H1 (cell line): ENCODE measurements at regions of chr6 and their contacts with region 1.

Region 1: DNA sequence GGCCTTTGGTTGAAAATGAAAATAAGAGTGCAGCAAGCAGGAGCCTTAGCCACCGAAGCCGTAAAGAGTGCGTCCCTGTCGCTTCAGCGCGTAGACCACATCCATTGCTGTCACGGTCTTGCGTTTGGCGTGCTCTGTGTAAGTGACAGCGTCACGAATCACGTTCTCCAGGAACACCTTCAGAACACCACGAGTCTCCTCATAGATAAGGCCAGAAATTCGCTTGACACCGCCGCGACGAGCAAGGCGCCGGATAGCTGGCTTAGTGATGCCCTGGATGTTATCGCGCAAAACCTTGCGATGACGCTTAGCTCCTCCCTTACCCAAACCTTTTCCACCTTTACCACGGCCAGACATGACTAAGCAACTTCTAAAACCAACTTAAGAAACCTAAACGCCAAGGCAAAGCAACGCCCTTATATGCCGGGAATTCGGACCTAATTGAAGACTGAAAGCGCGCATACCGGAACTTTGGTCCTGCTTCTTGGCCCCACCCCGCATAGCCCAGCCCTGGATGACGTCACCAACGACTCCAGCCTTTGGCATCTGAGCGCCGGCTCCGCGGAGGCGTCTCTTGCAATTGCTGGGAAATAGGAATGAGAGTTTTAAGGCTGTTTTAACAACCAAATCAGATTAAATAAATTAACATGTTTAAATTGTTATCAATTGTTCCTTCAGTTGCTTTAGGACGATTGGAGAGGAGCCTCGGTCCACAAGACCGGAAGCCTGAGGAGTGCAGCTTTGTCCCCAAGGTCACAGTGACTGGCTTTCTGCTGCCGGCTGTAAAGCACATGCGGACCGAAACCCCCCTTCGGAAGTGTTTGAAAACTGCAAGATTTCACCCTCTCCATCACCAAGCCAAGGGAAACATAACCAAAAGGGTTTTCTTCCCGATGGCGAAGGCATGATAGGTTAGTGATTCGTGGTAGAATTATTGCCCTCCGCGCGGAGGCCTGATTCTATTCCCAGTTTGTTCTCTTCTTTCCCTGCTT is 79.6 kb upstream of the BTN3A2 start:
- DNase-seq: peak; percentile 94 to 100
- H3K4me3 ChIP-seq: peak overlapping the region; percentile 74 to 95 (median 80)
- H3K27ac ChIP-seq: peak overlapping the region; percentile 96
- H3K4me1 ChIP-seq: peaks cover 0 to 7% (median 2%) of the 10 kb centered on the region in 4 experiments; a peak in 1 of 7 replicates
- H3K27me3 ChIP-seq: no peaks in the 10 kb centered on the region
- CTCF ChIP-seq: no peak
- EP300 ChIP-seq: peak in 1 of 2 experiments; percentile 97; a peak in 2 of 3 replicates
- POLR2A ChIP-seq: peak; percentile 100
- RAD21 ChIP-seq: no peak

Region 2: DNA sequence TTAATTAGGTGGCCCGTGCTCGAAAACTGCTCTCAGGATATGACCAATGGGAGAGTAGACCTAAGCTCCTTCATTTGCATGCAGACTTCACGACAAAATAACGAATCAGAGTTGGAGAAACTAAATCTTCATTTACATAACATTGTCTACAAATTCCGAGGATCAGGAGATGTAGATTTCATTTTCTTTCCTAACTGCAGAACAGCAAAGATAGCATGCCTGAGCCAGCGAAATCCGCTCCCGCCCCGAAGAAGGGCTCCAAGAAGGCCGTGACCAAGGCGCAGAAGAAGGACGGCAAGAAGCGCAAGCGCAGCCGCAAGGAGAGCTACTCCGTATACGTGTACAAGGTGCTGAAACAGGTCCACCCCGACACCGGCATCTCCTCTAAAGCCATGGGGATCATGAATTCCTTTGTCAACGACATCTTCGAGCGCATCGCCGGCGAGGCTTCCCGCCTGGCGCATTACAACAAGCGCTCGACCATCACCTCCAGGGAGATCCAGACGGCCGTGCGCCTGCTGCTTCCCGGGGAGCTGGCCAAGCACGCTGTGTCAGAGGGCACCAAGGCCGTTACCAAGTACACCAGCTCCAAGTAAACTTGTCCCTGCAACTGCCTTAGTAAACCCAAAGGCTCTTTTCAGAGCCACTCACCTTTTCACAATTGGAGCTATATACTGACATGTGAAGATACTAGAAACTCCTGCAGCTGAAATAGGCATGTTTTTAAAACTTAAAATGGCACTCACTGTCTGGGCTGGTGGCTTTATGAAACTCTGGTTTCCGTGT is 101.7 kb before region 1 on chr6:
- CTCF ChIA-PET with region 1: no interaction called
- POLR2A ChIA-PET with region 1: interaction called, 197 read pairs
- DNase-seq: peak in 1 of 2 experiments; percentile 82
- H3K4me3 ChIP-seq: peak overlapping the region; percentile 45 to 73 (median 70)
- H3K27ac ChIP-seq: peak overlapping the region; percentile 97
- H3K4me1 ChIP-seq: peaks cover 0 to 17% (median 8%) of the 10 kb centered on the region in 4 experiments; a peak in 5 of 7 replicates
- H3K27me3 ChIP-seq: no peaks in the 10 kb centered on the region
- CTCF ChIP-seq: no peak
- EP300 ChIP-seq: no peak
- POLR2A ChIP-seq: peak; percentile 94 to 99
- RAD21 ChIP-seq: no peak

Region 3: DNA sequence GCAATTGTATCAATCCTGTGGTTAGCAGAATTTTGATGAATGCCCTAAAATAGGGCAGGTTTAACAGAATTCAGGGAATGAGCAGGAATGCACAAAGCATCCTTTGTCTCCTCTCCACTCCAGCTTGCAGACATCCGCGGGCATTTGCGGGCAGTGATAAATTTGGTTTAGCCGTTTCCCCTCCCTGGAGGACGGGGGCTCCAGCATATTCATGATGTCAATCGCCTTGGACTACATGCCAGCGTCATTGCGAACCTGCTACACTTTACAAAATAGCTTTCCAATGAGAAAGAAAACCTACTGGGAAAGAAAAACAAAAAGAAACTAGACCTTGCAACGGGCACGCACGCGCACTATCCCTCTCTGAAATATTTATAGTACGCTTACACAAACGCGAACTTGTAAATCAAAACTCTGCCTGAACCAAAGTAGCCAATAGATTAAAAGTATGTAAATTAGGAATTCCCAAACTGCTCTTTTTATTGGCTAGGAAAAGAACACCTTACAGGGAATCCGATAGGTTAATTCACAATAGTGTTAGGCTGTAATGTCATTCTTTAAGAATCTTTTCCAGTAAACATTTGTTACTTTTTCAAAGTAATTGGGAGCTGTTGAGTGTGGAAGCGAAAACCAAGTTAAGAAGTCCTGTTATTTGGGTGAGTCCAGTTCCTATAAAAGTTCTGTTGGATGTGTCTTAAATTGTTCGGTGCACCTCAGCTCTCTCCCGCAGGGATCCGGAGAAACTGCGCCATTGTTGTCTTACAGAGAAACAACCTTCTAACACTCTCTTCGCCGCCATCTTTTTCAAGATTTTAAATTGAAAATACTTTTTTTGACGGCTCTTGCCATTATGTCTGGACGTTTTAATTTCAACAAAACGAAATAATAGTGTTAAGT is 61.5 kb before region 1 on chr6:
- CTCF ChIA-PET with region 1: interaction called, 6 read pairs
- POLR2A ChIA-PET with region 1: interaction called, 110 read pairs
- DNase-seq: no peak
- H3K4me3 ChIP-seq: peak overlapping the region; percentile 61 to 94 (median 76)
- H3K27ac ChIP-seq: peak overlapping the region; percentile 91
- H3K4me1 ChIP-seq: peaks cover 0 to 7% (median 3%) of the 10 kb centered on the region in 4 experiments; a peak in 5 of 7 replicates
- H3K27me3 ChIP-seq: no peaks in the 10 kb centered on the region
- CTCF ChIP-seq: no peak
- EP300 ChIP-seq: no peak
- POLR2A ChIP-seq: peak; percentile 48 to 76; a peak in 2 of 3 replicates
- RAD21 ChIP-seq: no peak

Region 4: GRCh38 chr6:26295691-26296555 is 10.5 kb after region 1 on chr6:
- CTCF ChIA-PET with region 1: interaction called, 3 read pairs
- POLR2A ChIA-PET with region 1: interaction called, 44 read pairs
- DNase-seq: no peak
- H3K4me3 ChIP-seq: no peak overlapping the region
- H3K27ac ChIP-seq: no peak overlapping the region
- H3K4me1 ChIP-seq: peaks cover 0 to 4% (median 0%) of the 10 kb centered on the region in 4 experiments; a peak in 1 of 7 replicates
- H3K27me3 ChIP-seq: peaks cover 0 to 1% (median 0%) of the 10 kb centered on the region in 4 experiments; a peak in 1 of 7 replicates
- CTCF ChIP-seq: no peak
- EP300 ChIP-seq: no peak
- POLR2A ChIP-seq: no peak
- RAD21 ChIP-seq: no peak

Region 5: GRCh38 chr6:26329763-26330511 is 44.5 kb after region 1 on chr6:
- CTCF ChIA-PET with region 1: no interaction called
- POLR2A ChIA-PET with region 1: interaction called, 10 read pairs
- DNase-seq: peak in 1 of 2 experiments; percentile 90
- H3K4me3 ChIP-seq: peak overlapping the region; percentile 72 to 91 (median 81); a peak in 7 of 8 replicates
- H3K27ac ChIP-seq: no peak overlapping the region
- H3K4me1 ChIP-seq: peaks cover 0 to 3% (median 0%) of the 10 kb centered on the region in 4 experiments; a peak in 2 of 7 replicates
- H3K27me3 ChIP-seq: peaks cover 0 to 10% (median 8%) of the 10 kb centered on the region in 4 experiments; a peak in 5 of 7 replicates
- CTCF ChIP-seq: no peak
- EP300 ChIP-seq: no peak
- POLR2A ChIP-seq: no peak
- RAD21 ChIP-seq: no peak

Region 6: DNA sequence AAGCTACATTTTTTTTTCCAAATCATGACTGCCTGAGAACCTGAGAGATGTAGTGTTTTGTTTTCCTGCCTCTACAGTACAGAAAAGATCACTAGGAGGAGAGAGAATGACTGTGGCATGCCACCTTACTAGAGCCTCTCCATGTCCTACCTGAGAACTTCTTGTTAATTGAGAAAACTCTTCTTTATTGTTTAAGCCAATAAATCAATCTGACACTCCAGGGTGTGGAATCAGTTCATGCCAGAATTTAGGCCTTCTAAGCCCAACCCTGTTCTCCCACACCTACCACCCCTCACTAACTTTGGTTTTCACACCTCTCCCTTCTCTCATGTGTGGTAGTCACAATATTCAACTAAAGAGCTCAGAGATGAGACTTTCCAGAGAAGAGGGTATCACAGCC is 54.6 kb after region 1 on chr6:
- CTCF ChIA-PET with region 1: no interaction called
- POLR2A ChIA-PET with region 1: no interaction called
- DNase-seq: no peak
- H3K4me3 ChIP-seq: no peak overlapping the region
- H3K27ac ChIP-seq: no peak overlapping the region
- H3K4me1 ChIP-seq: peaks cover 0 to 2% (median 0%) of the 10 kb centered on the region in 4 experiments; a peak in 1 of 7 replicates
- H3K27me3 ChIP-seq: no peaks in the 10 kb centered on the region
- CTCF ChIP-seq: no peak
- EP300 ChIP-seq: no peak
- POLR2A ChIP-seq: no peak
- RAD21 ChIP-seq: no peak

Region 7: GRCh38 chr6:26351544-26351953 is 66.1 kb after region 1 on chr6:
- CTCF ChIA-PET with region 1: no interaction called
- POLR2A ChIA-PET with region 1: no interaction called
- DNase-seq: no peak
- H3K4me3 ChIP-seq: no peak overlapping the region
- H3K27ac ChIP-seq: no peak overlapping the region
- H3K4me1 ChIP-seq: peaks cover 0 to under 1% (median 0%) of the 10 kb centered on the region in 4 experiments; a peak in 4 of 7 replicates
- H3K27me3 ChIP-seq: no peaks in the 10 kb centered on the region
- CTCF ChIP-seq: no peak
- EP300 ChIP-seq: no peak
- POLR2A ChIP-seq: no peak
- RAD21 ChIP-seq: no peak

Region 8: DNA sequence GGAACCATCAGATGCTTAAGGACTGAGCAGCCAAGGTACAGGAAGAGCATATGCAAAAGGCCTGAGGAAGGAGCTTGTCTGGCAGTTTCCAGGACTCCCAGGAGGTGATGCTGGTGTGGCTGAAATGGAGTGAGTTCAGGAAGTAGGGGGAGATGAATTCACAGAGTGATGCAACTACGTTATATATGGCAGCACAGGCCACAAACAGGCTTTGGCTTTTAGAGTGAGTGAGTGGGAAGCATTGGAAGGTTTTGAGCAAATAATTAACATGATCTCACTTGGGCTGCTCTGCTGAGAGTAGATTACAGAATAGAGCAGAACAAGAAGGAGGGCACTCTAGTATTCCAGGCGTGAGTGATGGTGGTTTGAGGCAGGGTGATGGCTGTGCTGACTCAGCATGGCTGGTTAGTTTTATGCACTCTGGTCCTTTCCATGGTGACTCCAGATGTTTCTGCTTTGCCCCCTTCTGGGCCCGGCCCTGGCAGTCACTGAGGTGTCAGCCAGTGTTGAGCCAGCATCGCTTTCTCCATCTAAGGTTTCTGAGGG is 104.0 kb after region 1 on chr6:
- CTCF ChIA-PET with region 1: no interaction called
- POLR2A ChIA-PET with region 1: no interaction called
- DNase-seq: no peak
- H3K4me3 ChIP-seq: no peak overlapping the region
- H3K27ac ChIP-seq: no peak overlapping the region
- H3K4me1 ChIP-seq: peaks cover 0 to 5% (median 4%) of the 10 kb centered on the region in 4 experiments; a peak in 3 of 7 replicates
- H3K27me3 ChIP-seq: no peaks in the 10 kb centered on the region
- CTCF ChIP-seq: peak in 2 of 3 experiments; percentile 1 to 17; a peak in 2 of 4 replicates
- EP300 ChIP-seq: no peak
- POLR2A ChIP-seq: no peak
- RAD21 ChIP-seq: peak; percentile 26 to 39; a peak in 3 of 4 replicates

Region 9: DNA sequence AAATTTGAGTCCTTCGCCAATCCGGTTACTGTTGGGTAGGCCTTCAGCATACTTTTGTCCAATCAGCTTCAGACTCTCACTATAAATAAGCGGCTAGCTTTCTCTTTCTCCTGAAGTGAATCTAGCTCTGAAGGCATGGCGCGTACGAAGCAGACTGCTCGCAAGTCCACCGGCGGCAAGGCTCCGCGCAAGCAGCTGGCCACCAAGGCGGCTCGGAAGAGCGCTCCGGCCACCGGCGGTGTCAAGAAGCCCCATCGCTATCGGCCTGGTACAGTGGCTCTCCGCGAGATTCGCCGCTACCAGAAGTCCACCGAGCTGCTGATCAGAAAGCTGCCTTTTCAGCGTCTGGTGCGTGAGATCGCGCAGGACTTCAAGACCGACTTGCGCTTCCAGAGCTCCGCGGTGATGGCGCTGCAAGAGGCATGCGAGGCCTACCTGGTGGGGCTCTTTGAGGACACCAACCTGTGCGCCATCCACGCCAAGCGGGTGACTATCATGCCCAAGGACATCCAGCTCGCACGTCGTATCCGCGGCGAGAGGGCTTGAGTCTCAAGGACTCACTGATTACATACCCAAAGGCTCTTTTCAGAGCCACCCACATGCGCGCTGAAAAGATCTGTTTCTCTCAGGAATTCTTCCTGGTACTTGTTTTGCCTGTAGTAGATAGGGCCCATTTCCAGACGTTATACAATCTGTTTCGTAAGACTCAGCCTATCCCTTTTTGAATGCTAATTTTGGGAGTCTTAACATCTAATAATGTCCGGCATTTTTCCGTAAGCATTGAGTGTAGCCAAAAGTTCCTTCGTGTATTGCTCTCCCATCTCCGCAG is 1524.7 kb after region 1 on chr6:
- CTCF ChIA-PET with region 1: no interaction called
- POLR2A ChIA-PET with region 1: interaction called, 27 read pairs
- DNase-seq: peak in 1 of 2 experiments; percentile 78
- H3K4me3 ChIP-seq: peak overlapping the region; percentile 78 to 96 (median 89)
- H3K27ac ChIP-seq: peak overlapping the region; percentile 84
- H3K4me1 ChIP-seq: peaks cover 0 to 6% (median 3%) of the 10 kb centered on the region in 4 experiments; a peak in 4 of 7 replicates
- H3K27me3 ChIP-seq: no peaks in the 10 kb centered on the region
- CTCF ChIP-seq: peak in 1 of 3 experiments; percentile 6; a peak in 1 of 4 replicates
- EP300 ChIP-seq: no peak
- POLR2A ChIP-seq: peak; percentile 98 to 100
- RAD21 ChIP-seq: no peak